ENCODE measurements at regions of chr3 and their contacts with region 1.

Region 1: GRCh38 chr3:28667646-28668621 is 319.3 kb upstream of the AZI2 start:
- DNase-seq: peak; percentile 41
- CTCF ChIP-seq: peak; percentile 86

Region 2: GRCh38 chr3:28651159-28651558 is 16.8 kb before region 1 on chr3:
- CTCF ChIA-PET with region 1: interaction called, 31 read pairs
- POLR2A ChIA-PET with region 1: no interaction called
- DNase-seq: no peak
- CTCF ChIP-seq: no peak